T-cell (primary cell): ENCODE measurements at regions of chr7 and their contacts with region 1.

Region 1: DNA sequence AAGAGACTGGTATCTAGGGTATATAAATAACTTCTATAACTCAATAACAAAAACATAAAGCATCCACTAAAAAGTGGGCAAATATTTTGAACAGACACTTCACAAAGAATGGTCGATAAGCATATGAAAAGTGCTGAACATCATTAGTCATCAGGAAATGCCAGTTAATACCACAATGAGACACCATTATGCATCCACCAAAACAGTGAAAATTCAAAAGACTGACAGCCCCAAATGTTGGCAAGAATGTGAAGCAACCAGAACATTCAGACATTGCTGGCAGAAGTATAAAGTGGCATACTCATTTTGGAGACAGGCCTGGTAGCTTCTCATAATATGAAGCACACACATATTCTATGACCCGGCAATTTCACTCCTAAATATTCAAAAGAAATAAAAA is 26.5 kb upstream of the GSAP start:
- DNase-seq: no peak
- ATAC-seq: no peak
- H3K4me3 ChIP-seq: no peak overlapping the region
- H3K4me3 Mint-ChIP-seq: no peak overlapping the region
- H3K27ac ChIP-seq: no peak overlapping the region
- H3K27ac Mint-ChIP-seq: no peak overlapping the region
- H3K4me1 ChIP-seq: no peaks in the 10 kb centered on the region
- H3K4me1 Mint-ChIP-seq: peaks cover 0 to 6% (median 3%) of the 10 kb centered on the region in 3 donors
- H3K27me3 ChIP-seq: no peaks in the 10 kb centered on the region
- H3K27me3 Mint-ChIP-seq: no peaks in the 10 kb centered on the region

Region 2: GRCh38 chr7:77208416-77208815 is 234.2 kb before region 1 on chr7:
- CTCF ChIA-PET with region 1: interaction called in 1 of 2 experiments, 10 read pairs
- POLR2A ChIA-PET with region 1: no interaction called
- DNase-seq: no peak
- ATAC-seq: no peak
- H3K4me3 ChIP-seq: no peak overlapping the region
- H3K4me3 Mint-ChIP-seq: no peak overlapping the region
- H3K27ac ChIP-seq: no peak overlapping the region
- H3K27ac Mint-ChIP-seq: no peak overlapping the region
- H3K4me1 ChIP-seq: no peaks in the 10 kb centered on the region
- H3K4me1 Mint-ChIP-seq: no peaks in the 10 kb centered on the region
- H3K27me3 ChIP-seq: no peaks in the 10 kb centered on the region
- H3K27me3 Mint-ChIP-seq: no peaks in the 10 kb centered on the region

Region 3: DNA sequence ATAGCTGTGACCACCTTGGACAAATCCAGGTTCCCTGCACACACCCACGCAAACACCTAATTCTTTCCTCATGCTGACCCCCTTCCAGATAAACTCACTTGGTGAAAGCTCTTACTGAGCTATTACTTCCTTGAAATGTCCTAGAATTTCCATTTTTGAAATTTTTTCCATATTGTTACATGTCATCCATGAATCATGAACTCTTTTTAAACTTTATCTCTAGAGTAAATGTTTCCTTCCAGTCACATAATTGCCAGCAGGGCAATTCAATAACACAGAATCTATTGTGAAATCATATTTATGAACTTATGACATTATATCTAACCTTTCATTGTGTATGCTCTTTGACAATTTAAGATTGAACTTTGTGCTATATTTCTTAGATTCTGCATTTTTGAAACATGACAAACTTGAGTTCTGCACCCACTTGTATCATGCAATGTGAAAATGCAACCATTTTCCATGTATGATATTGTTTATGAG is 216.2 kb before region 1 on chr7:
- CTCF ChIA-PET with region 1: no interaction called
- POLR2A ChIA-PET with region 1: no interaction called
- DNase-seq: no peak
- ATAC-seq: no peak
- H3K4me3 ChIP-seq: no peak overlapping the region
- H3K4me3 Mint-ChIP-seq: no peak overlapping the region
- H3K27ac ChIP-seq: no peak overlapping the region
- H3K27ac Mint-ChIP-seq: no peak overlapping the region
- H3K4me1 ChIP-seq: peaks cover 12 to 15% of the 10 kb centered on the region in 2 experiments
- H3K4me1 Mint-ChIP-seq: peaks cover 20 to 25% (median 25%) of the 10 kb centered on the region in 3 donors
- H3K27me3 ChIP-seq: no peaks in the 10 kb centered on the region
- H3K27me3 Mint-ChIP-seq: no peaks in the 10 kb centered on the region

Region 4: DNA sequence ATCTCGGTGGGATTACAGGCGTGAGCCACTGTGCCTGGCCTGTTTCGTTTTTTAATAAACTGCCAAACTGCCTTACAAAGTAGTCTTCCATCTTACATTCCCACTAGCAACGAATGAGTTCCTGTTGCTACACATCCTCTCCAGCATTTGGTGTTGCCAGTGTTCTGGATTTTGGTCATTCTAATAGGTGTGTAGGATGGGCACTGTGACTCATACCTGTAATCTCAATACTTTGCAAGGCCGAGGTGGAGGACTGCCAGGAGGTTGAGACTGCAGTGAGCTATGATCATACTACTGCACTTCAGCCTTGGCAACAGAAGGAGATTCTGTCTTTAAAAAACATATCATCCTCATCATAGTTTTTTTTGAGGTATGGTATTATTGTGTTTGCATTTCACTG is 232.2 kb after region 1 on chr7:
- CTCF ChIA-PET with region 1: no interaction called
- POLR2A ChIA-PET with region 1: interaction called in 1 of 2 experiments, 11 read pairs
- DNase-seq: no peak
- ATAC-seq: no peak
- H3K4me3 ChIP-seq: no peak overlapping the region
- H3K4me3 Mint-ChIP-seq: no peak overlapping the region
- H3K27ac ChIP-seq: no peak overlapping the region
- H3K27ac Mint-ChIP-seq: no peak overlapping the region
- H3K4me1 ChIP-seq: no peaks in the 10 kb centered on the region
- H3K4me1 Mint-ChIP-seq: no peaks in the 10 kb centered on the region
- H3K27me3 ChIP-seq: no peaks in the 10 kb centered on the region
- H3K27me3 Mint-ChIP-seq: no peaks in the 10 kb centered on the region